Mammary epithelial cell (primary cell): ENCODE measurements at regions of chr1 and their contacts with region 1.

Region 1: DNA sequence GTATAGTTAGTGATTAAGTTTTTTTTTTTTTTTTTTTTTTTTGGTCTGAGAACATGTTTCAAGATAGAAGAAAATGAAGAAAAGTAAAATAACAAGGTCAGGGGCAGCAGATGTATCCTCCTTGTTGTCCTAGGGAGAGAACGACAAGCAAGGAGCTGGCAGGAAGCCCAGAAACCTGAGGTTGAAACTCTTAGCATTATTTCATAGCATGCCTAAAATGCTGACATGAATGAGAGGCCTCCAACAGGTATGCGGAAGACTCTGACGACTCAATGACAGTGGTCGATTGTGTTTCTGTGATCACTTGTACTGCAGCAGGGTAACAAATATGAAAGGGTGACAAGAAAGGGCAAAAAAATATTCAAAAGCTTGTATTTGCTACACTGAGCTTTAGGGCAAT is 415.9 kb downstream of the PLA2G4A start:
- DNase-seq: peak; percentile 54
- H3K4me3 ChIP-seq: no peak overlapping the region
- H3K27ac ChIP-seq: no peak overlapping the region
- H3K4me1 ChIP-seq: no peaks in the 10 kb centered on the region
- H3K27me3 ChIP-seq: no peaks in the 10 kb centered on the region
- CTCF ChIP-seq: no peak

Region 2: DNA sequence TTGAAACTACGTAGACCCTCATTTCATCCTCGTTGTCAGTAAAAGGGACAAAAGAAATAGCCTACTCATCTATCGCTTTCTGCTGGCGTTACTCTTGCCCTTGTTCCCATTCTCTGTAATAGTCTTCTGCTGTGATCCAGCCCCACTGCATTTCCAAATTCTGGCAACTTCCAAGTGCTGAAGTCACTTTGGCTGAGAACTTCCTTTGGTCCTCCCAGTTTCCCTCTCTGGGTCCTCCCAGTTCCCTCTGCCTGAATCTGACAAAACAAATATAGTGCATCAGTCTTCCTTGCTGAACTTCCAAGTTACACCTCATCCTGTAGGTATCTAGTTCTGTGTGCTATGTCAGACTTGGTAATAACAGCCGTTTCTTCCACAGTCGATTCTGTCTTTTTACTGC is 462.9 kb before region 1 on chr1:
- CTCF ChIA-PET with region 1: no interaction called
- dilution Hi-C with region 1: no loop called
- in situ Hi-C with region 1: no loop called
- intact Hi-C with region 1: no loop called
- DNase-seq: no peak
- H3K4me3 ChIP-seq: no peak overlapping the region
- H3K27ac ChIP-seq: no peak overlapping the region
- H3K4me1 ChIP-seq: no peaks in the 10 kb centered on the region
- H3K27me3 ChIP-seq: no peaks in the 10 kb centered on the region
- CTCF ChIP-seq: no peak

Region 3: DNA sequence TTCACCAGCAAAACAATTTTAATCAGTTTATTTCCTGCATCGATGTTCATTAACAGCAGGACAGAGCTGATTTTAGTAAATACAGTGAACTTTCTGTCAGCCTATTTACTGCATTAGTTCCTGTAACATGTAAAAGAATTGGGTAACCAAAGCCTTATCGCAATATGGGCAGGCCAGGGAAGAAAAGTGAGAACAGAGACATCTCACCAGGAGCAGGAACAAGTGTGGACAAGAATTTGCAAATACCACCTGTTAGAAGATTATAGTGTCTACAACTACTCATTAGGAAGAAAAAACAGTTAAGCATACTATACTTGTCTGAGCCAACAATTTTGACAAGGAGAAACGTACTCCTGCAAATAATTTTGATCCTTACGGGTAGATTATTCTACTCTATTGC is 878.0 kb after region 1 on chr1:
- CTCF ChIA-PET with region 1: interaction called, 15 read pairs
- dilution Hi-C with region 1: no loop called
- in situ Hi-C with region 1: no loop called
- intact Hi-C with region 1: no loop called
- DNase-seq: peak; percentile 29
- H3K4me3 ChIP-seq: no peak overlapping the region
- H3K27ac ChIP-seq: no peak overlapping the region
- H3K4me1 ChIP-seq: peaks cover 3% of the 10 kb centered on the region
- H3K27me3 ChIP-seq: no peaks in the 10 kb centered on the region
- CTCF ChIP-seq: no peak